ENCODE measurements at regions of chr9 and their contacts with region 1.

Region 1: GRCh38 chr9:32968101-32969011 is 33.1 kb downstream of the APTX start:
- DNase-seq: no peak
- ATAC-seq: no peak
- H3K4me3 Mint-ChIP-seq: no peak overlapping the region
- H3K27ac Mint-ChIP-seq: no peak overlapping the region
- H3K4me1 Mint-ChIP-seq: peaks cover 2% of the 10 kb centered on the region
- H3K27me3 Mint-ChIP-seq: no peaks in the 10 kb centered on the region
- CTCF ChIP-seq: no peak

Region 2: GRCh38 chr9:32579706-32580331 is 388.5 kb before region 1 on chr9:
- CTCF ChIA-PET with region 1: interaction called, 75 read pairs
- POLR2A ChIA-PET with region 1: no interaction called
- intact Hi-C with region 1: loop called (anchors 1 kb)
- DNase-seq: peak; percentile 59
- ATAC-seq: peak; percentile 64
- H3K4me3 Mint-ChIP-seq: no peak overlapping the region
- H3K27ac Mint-ChIP-seq: no peak overlapping the region
- H3K4me1 Mint-ChIP-seq: no peaks in the 10 kb centered on the region
- H3K27me3 Mint-ChIP-seq: peaks cover 20% of the 10 kb centered on the region
- CTCF ChIP-seq: peak; percentile 97

Region 3: GRCh38 chr9:32589083-32589723 is 379.2 kb before region 1 on chr9:
- CTCF ChIA-PET with region 1: interaction called, 33 read pairs
- POLR2A ChIA-PET with region 1: interaction called, 3 read pairs
- intact Hi-C with region 1: loop called (anchors 1 kb)
- DNase-seq: no peak
- ATAC-seq: no peak
- H3K4me3 Mint-ChIP-seq: no peak overlapping the region
- H3K27ac Mint-ChIP-seq: no peak overlapping the region
- H3K4me1 Mint-ChIP-seq: no peaks in the 10 kb centered on the region
- H3K27me3 Mint-ChIP-seq: peaks cover 23% of the 10 kb centered on the region
- CTCF ChIP-seq: no peak